Activated naive CD8-positive, alpha-beta T cell treated with anti-CD3 and anti-CD28 coated beads, Interleukin-2, amount 10 ng/mL, durations not matched to agents 7 days and 5 days (primary cell): ENCODE measurements at regions of chr11 and their contacts with region 1.

Region 1: DNA sequence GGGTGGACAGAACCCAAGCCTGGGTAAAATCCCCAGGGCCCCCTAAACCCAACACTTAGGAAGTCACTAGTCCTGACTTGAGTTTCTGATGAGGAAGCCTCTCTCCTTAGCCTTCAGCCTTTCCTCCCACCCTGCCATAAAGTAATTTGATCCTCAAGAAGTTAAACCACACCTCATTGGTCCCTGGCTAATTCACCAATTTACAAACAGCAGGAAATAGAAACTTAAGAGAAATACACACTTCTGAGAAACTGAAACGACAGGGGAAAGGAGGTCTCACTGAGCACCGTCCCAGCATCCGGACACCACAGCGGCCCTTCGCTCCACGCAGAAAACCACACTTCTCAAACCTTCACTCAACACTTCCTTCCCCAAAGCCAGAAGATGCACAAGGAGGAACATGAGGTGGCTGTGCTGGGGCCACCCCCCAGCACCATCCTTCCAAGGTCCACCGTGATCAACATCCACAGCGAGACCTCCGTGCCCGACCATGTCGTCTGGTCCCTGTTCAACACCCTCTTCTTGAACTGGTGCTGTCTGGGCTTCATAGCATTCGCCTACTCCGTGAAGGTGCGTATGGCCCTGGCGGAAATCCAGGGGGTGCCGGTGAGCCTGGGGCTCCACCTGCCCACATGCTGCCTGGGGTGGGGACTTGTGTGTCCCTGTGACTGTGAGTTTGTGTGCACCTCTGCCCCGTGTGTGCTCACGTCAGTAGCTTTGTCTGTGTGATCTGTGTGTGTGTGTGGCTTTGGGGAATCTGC is at the start of gene IFITM1:
- DNase-seq: peak; percentile 78
- ATAC-seq: peak; percentile 41
- H3K4me3 Mint-ChIP-seq: peak within 1 kb of the TSS; percentile 97
- H3K27ac Mint-ChIP-seq: peak within 1 kb of the TSS; percentile 100
- H3K4me1 Mint-ChIP-seq: peaks cover 26% of the 10 kb centered on the region
- H3K27me3 Mint-ChIP-seq: no peaks in the 10 kb centered on the region
- total RNA-seq, gene IFITM1: 1,182 to 1,374 TPM

Region 2: DNA sequence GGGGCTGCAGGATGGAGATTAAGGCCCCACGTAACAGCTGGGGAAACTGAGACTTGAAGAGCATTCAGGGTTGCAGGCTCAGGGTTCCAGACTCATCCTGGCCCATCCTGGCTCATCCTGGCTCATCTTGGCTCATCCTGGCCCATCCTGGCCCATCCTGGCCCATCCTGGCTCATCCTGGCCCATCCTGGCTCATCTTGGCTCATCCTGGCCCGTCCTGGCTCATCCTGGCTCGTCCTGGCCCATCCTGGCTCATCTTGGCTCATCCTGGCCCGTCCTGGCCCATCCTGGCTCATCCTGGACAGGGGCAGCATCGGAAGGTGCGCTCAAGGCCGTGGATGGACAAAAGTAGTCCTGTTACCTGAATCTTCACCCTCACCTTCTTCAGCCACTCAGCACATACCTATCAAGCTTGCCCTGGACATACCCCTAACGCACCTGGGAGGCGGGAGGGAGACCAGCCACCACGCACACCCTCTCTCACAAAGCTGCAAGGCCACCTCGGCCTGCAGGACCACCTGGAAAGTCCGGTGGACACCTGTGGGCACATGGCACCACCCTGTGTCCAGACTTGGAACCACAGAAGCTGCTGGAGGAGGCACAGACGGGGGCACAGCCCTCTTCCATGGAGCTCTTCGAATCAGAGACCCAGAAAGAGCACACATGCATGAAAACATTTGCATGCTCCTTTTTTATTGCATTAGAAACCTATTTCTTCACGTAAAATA is 56.0 kb before region 1 on chr11:
- POLR2A ChIA-PET with region 1: no interaction called
- DNase-seq: no peak
- ATAC-seq: no peak
- H3K4me3 Mint-ChIP-seq: no peak overlapping the region
- H3K27ac Mint-ChIP-seq: peak overlapping the region; percentile 24
- H3K4me1 Mint-ChIP-seq: peaks cover 2% of the 10 kb centered on the region
- H3K27me3 Mint-ChIP-seq: peaks cover 3% of the 10 kb centered on the region

Region 3: DNA sequence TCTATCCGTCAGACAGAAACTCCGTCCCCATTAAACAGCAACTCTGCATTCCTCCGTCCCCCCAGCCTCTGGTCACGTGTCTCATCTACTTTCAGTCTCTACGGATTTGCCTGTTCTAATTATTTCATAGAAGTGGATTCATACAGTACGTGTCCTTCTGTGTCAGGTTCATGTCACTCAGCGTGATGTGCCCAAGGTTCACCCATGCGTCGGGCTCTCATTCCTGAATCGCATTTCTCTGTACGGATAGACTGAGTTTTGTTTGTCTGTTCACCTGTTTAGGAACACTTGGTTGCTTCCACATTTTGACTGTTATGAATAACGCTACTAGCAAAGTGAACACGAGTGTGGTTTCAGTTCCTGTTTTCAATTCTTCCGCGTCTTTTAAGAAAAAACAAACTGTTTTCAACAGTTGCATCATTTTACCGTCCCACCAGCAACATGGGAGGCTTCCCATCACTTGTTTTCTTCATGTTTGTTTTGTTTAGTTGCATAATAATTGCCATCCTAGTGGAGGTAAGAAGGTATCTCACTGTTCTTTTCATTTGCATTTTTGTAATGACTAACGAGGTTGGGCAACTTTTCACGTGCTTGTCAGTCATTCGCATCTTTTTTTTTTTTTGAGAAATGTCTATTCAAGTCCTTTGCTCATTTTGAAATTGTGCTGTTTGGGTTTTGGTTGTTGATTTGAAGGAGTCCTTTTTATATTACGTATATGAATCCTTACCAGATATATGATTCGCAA is 44.6 kb before region 1 on chr11:
- POLR2A ChIA-PET with region 1: interaction called, 33 read pairs
- DNase-seq: peak; percentile 56
- ATAC-seq: peak; percentile 34
- H3K4me3 Mint-ChIP-seq: peak overlapping the region; percentile 91
- H3K27ac Mint-ChIP-seq: peak overlapping the region; percentile 96
- H3K4me1 Mint-ChIP-seq: peaks cover 25% of the 10 kb centered on the region
- H3K27me3 Mint-ChIP-seq: peaks cover 2% of the 10 kb centered on the region

Region 4: DNA sequence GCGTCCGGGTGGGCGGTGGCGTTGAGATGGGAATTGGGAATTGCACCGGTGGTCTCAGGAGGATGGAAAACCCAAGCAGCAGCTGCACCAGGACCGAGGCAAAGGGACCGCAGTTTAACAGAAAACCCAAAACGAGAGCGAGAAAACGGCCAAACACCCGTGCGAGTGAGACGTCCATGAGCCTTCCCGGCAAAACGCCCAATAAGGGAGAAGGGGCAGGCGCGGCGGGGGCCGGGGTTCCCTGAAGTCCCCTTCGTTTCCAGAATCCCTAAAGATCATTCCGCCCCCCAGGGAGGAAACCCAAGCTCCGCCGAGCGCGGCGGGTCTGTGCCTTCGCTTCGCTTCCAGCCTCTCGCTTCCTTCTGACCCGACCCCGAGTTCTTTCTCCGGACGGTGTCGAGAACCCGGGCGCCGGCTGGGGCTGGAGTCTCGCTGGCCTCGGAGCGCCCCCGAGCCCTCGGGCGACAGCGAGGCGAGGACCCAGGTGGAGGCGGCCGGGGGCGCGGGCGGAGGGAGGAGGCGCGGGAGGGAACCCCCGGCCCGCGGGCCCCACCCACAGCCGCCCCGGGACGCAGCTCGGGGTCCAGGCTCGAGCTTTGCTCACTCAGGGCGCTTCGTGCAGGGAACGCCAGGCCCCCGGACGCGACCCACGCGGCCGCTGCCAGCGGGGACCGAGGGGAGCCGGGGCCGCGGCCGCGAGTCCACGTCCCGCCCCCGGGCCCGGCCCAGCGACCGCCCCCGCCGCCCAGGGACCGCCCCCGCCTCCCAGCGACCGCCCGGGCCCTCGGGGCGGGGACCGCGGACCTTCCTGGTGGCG is 25.4 kb before region 1 on chr11 and contains the start of gene PGGHG:
- POLR2A ChIA-PET with region 1: interaction called, 178 read pairs
- DNase-seq: peak; percentile 88
- ATAC-seq: peak; percentile 38
- H3K4me3 Mint-ChIP-seq: peak within 1 kb of the TSS; percentile 93
- H3K27ac Mint-ChIP-seq: peak within 1 kb of the TSS; percentile 98
- H3K4me1 Mint-ChIP-seq: peaks cover 34% of the 10 kb centered on the region
- H3K27me3 Mint-ChIP-seq: no peaks in the 10 kb centered on the region
- total RNA-seq, gene PGGHG: 641 to 664 TPM

Region 5: GRCh38 chr11:326842-327580 is 13.0 kb after region 1 on chr11:
- POLR2A ChIA-PET with region 1: interaction called, 103 read pairs
- DNase-seq: peak; percentile 77
- ATAC-seq: peak; percentile 62
- H3K4me3 Mint-ChIP-seq: peak overlapping the region; percentile 86
- H3K27ac Mint-ChIP-seq: peak overlapping the region; percentile 100
- H3K4me1 Mint-ChIP-seq: peaks cover 68% of the 10 kb centered on the region
- H3K27me3 Mint-ChIP-seq: no peaks in the 10 kb centered on the region

Region 6: DNA sequence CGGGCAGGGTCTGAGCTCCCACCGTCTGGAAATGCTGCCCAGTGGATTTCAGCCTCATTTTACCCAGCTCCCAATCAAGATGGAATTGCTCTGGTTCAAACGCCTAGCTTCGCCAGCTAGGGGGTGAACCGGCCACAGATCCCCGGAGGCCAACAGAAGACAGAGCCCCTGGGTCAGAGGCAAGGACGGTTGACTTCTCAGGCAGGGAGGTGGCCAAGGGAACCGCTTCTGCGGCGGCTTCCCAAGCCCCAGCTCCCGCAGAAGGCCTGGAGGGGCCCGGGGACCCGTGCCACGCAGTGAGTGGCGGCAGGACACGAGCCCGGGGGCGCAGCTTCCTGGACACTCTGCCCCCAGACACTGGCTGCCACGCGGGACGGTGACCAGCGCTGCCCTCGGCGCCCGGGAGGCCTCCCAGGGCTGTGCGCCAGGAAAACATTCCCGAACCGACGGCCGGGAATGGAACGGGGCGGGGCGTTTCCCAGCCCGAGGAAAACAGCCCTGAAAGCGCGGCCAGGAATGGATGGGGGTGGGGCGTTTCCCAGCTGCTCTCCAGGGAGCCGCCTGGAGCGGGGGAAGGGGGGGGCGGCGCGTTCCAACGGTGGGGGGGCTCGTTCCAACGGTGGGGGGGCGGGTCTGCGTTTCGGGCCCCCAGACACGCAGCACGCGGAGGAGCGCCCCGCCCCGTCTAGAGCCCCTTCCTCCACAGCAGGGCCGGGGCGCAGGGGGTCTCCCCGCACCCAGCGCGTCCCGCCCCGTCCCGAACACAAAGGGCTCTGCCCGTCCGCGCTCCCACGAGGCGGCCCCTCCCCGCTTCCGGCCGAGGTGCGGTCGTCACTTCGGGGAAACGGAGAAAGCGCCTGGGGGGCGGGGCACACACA is 41.9 kb after region 1 on chr11:
- POLR2A ChIA-PET with region 1: interaction called, 200 read pairs
- DNase-seq: peak; percentile 94
- ATAC-seq: peak; percentile 74
- H3K4me3 Mint-ChIP-seq: peak overlapping the region; percentile 89
- H3K27ac Mint-ChIP-seq: peak overlapping the region; percentile 92
- H3K4me1 Mint-ChIP-seq: peaks cover 39% of the 10 kb centered on the region
- H3K27me3 Mint-ChIP-seq: peaks cover 5% of the 10 kb centered on the region

Region 7: DNA sequence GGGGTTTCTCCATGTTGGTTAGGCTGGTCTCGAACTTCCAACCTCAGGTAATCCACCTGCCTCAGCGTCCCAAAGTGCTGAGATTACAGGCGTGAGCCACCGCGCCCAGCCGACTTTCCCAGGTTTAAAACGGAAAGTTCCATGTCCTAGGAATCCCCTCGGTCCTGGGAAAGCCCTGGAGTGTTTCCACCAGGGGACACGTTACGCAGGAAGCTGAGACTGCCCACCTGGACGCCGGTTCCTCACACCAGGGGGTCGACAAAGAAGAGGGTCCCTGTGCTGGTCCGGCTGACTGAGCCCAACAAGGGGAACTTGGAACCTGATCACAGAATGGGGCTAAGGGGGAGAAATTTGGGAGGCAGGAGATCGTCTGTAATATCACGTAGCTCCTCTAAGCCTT is 51.9 kb after region 1 on chr11:
- POLR2A ChIA-PET with region 1: no interaction called
- DNase-seq: no peak
- ATAC-seq: no peak
- H3K4me3 Mint-ChIP-seq: no peak overlapping the region
- H3K27ac Mint-ChIP-seq: no peak overlapping the region
- H3K4me1 Mint-ChIP-seq: peaks cover 8% of the 10 kb centered on the region
- H3K27me3 Mint-ChIP-seq: peaks cover 31% of the 10 kb centered on the region

Region 8: DNA sequence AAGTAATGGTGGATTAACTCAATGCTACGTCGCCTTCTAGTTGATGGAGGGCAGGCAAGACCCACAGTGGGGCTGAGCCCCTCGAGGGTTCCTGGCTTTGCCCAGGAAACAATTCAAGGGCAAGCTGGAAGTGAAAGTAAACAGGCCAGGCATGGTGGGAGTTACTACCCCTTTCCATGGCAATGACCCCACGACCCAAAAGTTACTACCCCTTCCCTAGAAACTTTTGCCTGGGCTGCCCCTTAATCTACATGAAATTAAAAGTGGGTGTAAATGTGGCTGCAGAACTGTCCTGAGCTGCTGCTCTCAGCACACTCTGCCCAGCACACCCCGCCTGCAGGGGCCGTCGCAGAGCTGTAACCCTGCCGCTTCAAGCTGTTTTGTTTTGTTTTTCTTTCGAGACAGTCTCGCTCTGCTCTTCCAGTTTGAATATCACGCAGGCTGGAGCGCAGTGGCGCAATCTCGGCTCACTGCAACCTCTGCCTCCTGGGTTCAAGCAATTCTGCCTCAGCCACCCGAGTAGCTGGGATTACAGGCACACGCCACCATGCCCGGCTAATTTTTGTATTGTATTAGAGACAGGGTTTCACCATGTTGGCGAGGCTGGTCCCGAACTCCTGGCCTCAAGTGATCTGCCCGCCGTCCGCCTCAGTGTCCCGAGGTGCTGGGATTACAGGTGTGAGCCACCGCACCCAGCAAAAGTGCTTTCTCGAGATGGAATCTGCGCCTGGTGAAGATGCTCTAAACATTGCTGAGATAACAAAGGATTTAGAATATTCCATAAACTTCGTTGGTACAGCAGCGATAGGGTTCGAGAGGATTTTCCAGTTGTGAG is 199.0 kb after region 1 on chr11:
- POLR2A ChIA-PET with region 1: no interaction called
- DNase-seq: no peak
- ATAC-seq: no peak
- H3K4me3 Mint-ChIP-seq: no peak overlapping the region
- H3K27ac Mint-ChIP-seq: no peak overlapping the region
- H3K4me1 Mint-ChIP-seq: no peaks in the 10 kb centered on the region
- H3K27me3 Mint-ChIP-seq: no peaks in the 10 kb centered on the region